Right cardiac atrium (tissue), 5 donors: ENCODE measurements at regions of chr11 and their contacts with region 1.

Region 1: DNA sequence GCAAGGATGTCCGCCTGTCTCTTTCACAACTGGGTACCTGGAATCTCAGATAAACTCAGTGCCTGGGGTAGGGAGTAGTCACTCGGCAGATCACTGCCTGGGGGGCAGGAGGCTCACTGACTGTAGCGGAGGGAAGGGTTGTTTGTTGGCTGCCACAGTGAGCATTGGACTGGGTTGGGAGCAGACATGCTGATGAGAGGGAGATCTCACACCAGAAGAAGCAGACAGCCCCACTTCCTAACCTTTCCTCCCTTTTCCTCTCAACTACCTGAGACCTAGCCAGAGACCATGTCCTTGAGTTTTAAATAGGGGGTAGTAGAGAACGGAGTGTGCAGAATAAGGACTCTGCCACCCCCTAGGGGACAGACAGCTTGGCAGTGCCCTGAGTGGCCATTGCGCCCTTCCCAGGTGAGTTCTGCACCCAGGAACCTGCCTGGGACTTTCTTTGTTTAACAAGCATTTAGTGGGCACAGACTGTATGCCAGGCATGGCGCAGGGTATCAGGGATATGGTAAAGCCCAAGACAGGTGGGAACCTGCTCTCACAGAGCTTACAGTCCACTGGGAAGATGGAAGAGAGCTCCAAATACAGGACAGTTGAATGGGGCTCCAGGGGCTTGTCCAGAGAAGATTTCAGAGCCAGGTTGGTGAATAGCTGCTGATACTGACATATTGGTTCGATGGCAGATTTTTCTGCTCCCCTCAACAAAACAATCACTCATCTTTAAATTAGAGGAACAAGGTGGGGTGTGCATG is 115.7 kb upstream of the NNMT start:
- DNase-seq: peak in 2 of 3 donors; percentile 49 to 78
- ATAC-seq: peak; percentile 51 to 59
- H3K4me3 ChIP-seq: peak overlapping the region; percentile 48
- H3K27ac ChIP-seq: peak overlapping the region; percentile 100
- H3K4me1 ChIP-seq: peaks cover 67% of the 10 kb centered on the region
- H3K27me3 ChIP-seq: no peaks in the 10 kb centered on the region

Region 2: DNA sequence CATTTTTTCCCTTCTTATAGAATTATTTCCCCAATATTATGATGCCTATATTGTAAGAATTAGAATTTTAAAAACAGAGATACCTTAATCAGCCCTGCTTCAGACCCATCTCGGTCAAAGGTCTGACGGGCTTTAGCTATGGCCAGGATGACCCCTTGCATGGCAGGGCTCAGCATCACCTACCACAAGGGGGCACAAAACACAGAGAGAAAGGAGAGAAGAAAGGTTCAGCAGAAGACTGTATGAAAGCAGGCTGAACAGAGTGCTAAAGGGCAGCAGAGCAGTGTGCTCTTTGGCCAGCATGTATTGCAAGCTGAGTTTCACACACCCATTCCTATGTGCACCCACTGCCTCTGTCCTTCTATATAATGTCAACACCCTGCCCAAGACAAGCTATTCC is 374.1 kb before region 1 on chr11:
- intact Hi-C with region 1: no loop called
- DNase-seq: no peak
- ATAC-seq: peak; percentile 39 to 60
- H3K4me3 ChIP-seq: no peak overlapping the region
- H3K27ac ChIP-seq: no peak overlapping the region
- H3K4me1 ChIP-seq: no peaks in the 10 kb centered on the region
- H3K27me3 ChIP-seq: no peaks in the 10 kb centered on the region

Region 3: GRCh38 chr11:114036156-114036811 is 144.2 kb before region 1 on chr11:
- intact Hi-C with region 1: loop called in 1 of 4 experiments (anchors 5 kb)
- DNase-seq: peak; percentile 88 to 94 (median 94)
- ATAC-seq: peak; percentile 94 to 96
- H3K4me3 ChIP-seq: peak overlapping the region; percentile 15
- H3K27ac ChIP-seq: peak overlapping the region; percentile 38
- H3K4me1 ChIP-seq: peaks cover 2% of the 10 kb centered on the region
- H3K27me3 ChIP-seq: no peaks in the 10 kb centered on the region

Region 4: DNA sequence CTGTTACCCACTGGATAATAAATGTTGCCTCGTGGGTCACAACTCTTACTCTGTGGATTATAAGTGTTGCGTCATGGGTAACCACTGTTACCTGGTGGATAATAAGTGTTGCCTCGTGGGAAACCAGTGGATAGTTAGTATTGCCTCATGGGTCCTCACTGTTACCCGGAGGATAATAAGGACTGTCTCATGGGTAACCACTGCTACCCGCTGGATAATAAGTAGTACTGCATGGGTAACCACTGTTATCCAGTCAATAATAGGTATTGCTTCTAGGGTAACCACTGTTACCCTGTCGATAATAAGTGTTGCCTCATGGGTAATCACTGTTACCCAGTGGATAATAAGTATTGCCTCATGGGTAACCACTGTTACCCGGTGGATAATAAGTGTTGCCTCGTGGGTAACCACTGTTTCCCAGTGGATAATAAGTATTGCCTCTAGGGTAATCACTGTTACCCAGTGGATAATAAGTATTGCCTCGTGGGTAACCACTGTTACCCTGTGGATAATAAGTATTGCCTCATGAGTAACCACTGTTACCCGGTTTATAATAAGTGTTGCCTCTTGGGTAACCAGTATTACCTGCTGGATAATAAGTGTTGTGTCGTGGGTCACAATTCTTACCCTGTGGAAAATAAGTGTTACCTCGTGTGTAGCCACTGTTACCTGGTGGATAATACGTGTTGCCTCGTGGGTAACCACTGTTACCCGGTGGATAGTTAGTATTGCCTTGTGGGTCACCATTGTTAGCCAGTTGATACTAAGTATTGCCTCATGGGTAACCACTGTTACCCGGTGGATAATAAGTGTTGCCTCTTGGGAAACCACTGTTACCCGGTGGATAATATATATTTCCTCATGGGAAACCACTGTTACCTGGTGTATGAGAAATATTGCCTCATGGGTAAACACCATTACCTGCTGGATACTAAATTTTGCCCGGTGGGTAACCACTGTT is 430.8 kb after region 1 on chr11:
- intact Hi-C with region 1: no loop called
- DNase-seq: no peak
- ATAC-seq: no peak
- H3K4me3 ChIP-seq: no peak overlapping the region
- H3K27ac ChIP-seq: no peak overlapping the region
- H3K4me1 ChIP-seq: no peaks in the 10 kb centered on the region
- H3K27me3 ChIP-seq: no peaks in the 10 kb centered on the region